ENCODE measurements at regions of chr15 and their contacts with region 1.

Region 1: DNA sequence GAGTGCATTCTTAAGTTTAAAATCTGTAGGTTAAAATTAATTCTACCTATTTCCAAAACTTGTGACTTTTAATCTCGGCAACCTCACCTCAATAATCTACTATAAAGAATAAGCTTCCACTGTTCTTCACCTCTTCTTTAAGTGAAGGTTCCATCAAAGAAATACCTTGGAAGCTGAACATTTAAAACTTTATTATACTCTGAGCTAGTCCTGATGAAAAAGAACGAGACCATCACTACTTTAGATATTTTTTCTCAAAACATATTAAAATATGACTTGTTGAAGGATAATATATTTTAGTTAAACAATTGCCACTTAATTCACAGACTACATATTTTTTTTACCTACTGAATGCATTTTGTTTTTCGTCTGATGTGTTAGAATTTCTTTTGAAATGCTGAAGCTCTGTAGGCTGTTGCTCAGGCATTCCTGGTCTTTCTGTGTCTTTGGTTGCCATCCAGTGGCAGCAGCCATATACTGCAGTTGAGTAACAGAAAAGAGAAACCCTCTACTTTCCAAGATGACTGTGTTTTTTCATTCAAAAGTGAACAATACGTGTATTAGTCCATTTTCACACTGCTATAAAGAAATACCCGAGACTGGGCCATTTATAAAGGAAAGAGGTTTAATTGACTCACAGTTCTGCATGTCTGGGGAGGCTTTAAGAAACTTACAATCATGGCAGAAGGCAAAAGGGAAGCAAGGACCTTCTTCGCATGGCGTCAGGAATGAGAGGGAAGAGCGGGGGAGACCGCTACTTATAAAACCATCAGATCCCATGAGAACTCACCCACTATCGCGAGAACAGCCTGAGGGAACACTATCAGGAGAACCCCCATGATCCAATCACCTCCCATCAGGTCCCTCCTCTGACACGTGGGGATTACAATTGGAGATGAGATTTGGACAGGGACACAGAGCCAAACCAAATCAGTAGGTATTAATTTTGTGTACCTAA is 4.5 kb upstream of the GOLGA8B start:
- DNase-seq: peak; percentile 78
- ATAC-seq: peak; percentile 64
- H3K4me3 Mint-ChIP-seq: peak overlapping the region; percentile 74
- H3K27ac Mint-ChIP-seq: peak overlapping the region; percentile 71
- H3K4me1 Mint-ChIP-seq: peaks cover 6% of the 10 kb centered on the region
- H3K27me3 Mint-ChIP-seq: peaks cover 22% of the 10 kb centered on the region

Region 2: DNA sequence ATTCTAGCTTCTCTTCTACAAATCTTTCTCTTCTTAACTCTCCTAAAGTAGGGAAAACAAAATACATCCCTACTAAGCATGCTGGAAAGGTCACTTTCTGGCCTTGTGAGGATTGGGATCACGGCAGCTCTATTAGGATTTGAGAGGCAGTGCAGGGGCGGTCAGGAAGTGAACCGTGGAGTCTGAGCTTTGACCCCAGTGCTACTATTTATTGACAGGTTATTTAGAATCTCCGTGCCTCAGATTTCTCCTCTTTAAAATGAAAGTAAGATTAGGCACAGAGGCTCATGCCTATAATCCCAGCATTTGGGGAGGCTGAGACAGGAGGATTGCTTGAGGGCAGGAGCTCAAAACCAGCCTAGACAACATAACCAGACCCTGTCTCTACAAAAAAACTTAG is 661.7 kb before region 1 on chr15:
- CTCF ChIA-PET with region 1: no interaction called
- POLR2A ChIA-PET with region 1: no interaction called
- intact Hi-C with region 1: no loop called
- DNase-seq: no peak
- ATAC-seq: no peak
- H3K4me3 Mint-ChIP-seq: no peak overlapping the region
- H3K27ac Mint-ChIP-seq: no peak overlapping the region
- H3K4me1 Mint-ChIP-seq: no peaks in the 10 kb centered on the region
- H3K27me3 Mint-ChIP-seq: no peaks in the 10 kb centered on the region

Region 3: DNA sequence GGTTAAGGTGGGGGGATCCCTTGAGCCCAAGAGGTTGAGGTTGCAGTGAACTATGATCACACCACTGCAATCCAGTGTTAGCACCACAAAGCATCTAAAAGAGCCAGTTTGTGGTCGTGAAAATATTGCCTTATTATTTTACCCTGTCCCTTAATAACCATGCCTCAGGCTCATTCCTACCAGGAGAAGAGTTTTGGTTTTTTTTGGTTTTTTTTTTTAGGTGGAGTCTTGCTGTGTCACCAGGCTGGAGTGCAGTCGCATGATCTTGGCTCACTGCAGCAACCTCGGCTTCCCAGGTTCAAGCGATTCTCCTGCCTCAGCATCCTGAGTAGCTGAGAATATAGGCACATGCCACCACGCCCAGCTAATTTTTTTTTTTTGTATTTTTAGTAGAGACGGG is 531.1 kb before region 1 on chr15:
- CTCF ChIA-PET with region 1: no interaction called
- POLR2A ChIA-PET with region 1: no interaction called
- intact Hi-C with region 1: loop called (anchors 1 to 2 kb)
- DNase-seq: no peak
- ATAC-seq: no peak
- H3K4me3 Mint-ChIP-seq: no peak overlapping the region
- H3K27ac Mint-ChIP-seq: no peak overlapping the region
- H3K4me1 Mint-ChIP-seq: peaks cover 4% of the 10 kb centered on the region
- H3K27me3 Mint-ChIP-seq: no peaks in the 10 kb centered on the region

Region 4: DNA sequence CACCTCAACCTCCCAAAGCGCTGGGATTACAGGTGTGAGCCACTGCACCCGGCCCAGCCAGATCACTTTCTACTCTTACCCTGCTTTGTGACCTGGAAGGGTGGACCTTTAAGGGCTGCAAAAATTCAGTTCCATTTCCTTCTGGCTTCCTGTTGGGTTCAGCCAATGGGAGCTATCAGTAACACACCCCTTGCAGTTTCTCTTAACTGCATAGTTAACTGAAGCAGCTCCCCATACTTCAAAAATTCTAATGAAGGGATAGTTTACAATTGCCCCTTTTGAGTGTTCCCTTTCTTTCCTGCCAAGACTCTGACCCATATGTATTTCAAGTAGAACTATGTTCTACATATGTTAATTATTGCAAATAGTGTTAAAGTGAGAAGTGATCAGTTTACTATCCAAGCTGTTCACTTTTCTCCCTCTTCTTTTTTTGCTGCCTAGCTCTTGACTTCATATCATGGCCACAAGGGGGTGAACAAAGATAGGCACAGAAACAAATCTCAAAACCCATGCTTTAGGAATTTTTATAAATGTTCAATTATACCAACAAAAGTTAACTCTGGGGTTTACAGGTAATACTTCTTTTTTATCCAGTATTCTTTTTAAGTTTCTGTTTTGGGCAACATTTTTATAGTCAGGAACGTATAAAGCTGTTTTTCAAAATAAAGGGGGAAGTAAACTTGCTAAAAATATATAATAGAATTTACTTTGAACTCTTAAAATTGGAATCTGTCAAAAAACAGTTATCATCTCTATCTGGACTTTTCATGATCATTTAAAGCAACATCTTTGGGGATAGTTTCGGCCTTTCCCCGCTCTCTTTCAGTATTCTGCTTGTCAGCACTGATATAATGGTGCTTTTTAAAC is 478.0 kb before region 1 on chr15:
- CTCF ChIA-PET with region 1: interaction called, 6 read pairs
- POLR2A ChIA-PET with region 1: no interaction called
- intact Hi-C with region 1: loop called (anchors 1 to 5 kb)
- DNase-seq: no peak
- ATAC-seq: peak; percentile 60
- H3K4me3 Mint-ChIP-seq: no peak overlapping the region
- H3K27ac Mint-ChIP-seq: no peak overlapping the region
- H3K4me1 Mint-ChIP-seq: no peaks in the 10 kb centered on the region
- H3K27me3 Mint-ChIP-seq: peaks cover 2% of the 10 kb centered on the region

Region 5: DNA sequence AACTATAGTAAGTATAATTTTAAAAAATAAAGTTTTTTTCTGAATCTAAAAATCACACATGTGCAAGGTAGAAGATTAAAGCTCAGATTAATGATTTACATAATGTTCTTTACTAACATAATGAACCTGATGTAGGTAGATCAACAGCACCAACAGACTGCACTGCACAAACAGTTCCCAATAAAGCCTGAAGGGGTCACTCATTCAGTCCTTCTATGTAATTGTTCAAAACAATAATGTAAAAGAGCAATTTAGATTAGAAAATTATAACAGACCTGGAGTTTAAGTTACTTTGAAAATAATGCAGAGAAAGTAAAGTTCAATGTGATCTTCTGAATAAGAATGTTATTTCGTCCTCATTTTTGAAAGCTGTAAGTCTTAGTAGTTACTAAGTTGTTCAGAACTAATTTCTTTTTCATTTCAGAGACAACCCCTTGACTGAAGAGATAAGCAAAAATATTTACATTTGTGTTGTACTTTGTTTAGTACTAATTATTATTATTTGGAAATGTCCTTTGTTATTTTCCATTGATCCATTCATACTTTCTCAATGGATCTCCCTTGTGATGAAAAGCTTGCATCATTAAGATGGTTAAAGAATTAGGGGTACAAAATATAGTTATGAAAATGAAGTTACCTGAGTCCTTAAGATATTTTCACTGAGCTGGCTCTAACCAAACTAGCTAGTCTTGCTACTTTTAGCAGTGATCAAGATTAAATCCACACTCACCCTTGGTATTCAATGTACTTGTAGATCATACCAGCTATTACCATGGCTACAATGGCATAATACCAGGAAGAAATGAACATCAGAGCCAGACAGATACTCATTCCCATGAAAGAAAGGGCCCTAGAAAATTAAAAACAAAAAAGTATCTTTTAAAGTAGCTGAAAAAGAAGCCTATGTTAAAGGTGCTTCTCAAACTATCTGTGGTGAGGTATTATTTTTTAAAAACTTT is 346.3 kb before region 1 on chr15:
- CTCF ChIA-PET with region 1: interaction called, 9 read pairs
- POLR2A ChIA-PET with region 1: no interaction called
- intact Hi-C with region 1: loop called in 1 of 2 experiments (anchors 2 kb)
- DNase-seq: peak; percentile 35
- ATAC-seq: peak; percentile 68
- H3K4me3 Mint-ChIP-seq: no peak overlapping the region
- H3K27ac Mint-ChIP-seq: peak overlapping the region; percentile 39
- H3K4me1 Mint-ChIP-seq: peaks cover 33% of the 10 kb centered on the region
- H3K27me3 Mint-ChIP-seq: no peaks in the 10 kb centered on the region

Region 6: DNA sequence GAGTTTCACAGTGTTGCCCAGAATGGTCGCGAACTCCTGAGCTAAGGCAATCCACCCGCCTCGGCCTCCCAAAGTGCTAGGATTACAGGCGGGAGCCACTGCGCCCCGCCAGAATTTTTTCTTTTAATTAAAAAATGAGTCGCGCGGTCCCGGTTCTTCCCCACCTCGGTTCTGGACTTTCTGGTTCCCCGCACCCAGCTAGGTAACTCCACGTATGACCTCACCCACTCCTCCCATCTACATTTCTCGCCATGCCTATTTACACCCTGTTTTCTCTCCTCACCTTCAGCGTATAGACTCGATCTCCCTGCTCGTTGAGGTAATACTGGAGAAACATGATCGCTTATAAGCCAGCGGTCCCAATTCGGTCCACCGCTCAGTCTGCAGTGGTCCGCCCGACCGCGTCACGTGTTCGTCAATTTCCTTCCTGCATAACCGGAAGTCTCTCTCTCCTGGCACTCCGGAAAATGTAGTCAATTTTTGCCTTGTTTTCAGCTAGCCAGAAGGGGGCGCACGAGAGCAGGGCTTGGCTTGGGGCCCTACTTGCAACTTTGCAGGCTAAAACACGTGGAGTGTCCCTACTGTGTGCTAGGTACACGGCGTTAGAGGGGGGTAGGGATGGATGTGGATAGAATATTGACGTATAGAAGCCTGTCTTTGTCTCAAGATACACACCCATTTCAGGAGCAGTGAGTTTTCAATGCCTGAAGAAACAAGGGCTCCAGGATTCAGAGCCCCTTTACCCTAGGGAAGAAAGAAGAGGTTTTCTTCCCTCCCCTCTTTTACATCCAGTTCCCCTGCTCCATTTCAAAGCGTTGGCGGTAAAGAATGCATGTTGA is 245.0 kb before region 1 on chr15 and contains the starts of genes NOP10 and NUTM1:
- CTCF ChIA-PET with region 1: interaction called, 3 read pairs
- POLR2A ChIA-PET with region 1: interaction called, 4 read pairs
- intact Hi-C with region 1: loop called (anchors 1 to 2 kb)
- DNase-seq: peak; percentile 97
- ATAC-seq: peak; percentile 91
- H3K4me3 Mint-ChIP-seq: no peak within 1 kb of the TSS
- H3K27ac Mint-ChIP-seq: peak within 1 kb of the TSS; percentile 88
- H3K4me1 Mint-ChIP-seq: peaks cover 30% of the 10 kb centered on the region
- H3K27me3 Mint-ChIP-seq: no peaks in the 10 kb centered on the region
- total RNA-seq, gene NOP10: 217 to 313 TPM
- total RNA-seq, gene NUTM1: not detected

Region 7: DNA sequence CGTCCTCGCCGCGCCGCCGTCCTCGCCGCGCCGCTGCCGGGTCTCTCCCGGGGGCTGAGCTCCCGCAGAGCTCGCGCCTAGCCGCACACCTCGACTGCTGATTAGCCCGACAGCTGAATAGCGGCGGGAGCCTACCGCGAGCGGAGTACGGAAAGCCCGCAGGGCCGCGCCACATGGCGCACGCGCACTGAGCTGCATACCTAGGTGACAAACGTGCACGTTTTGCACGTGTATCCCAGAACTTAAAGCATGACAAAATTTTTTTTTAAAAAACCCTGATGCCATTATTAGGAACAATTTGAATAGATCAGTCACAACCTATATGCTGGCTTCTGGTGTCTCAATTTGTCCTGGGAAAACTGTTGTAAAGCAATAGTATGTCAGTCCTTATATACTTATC is 150.3 kb before region 1 on chr15 and contains the start of gene GOLGA8A:
- CTCF ChIA-PET with region 1: interaction called, 3 read pairs
- POLR2A ChIA-PET with region 1: no interaction called
- intact Hi-C with region 1: loop called in 1 of 2 experiments (anchors 5 kb)
- DNase-seq: peak; percentile 94
- ATAC-seq: peak; percentile 85
- H3K4me3 Mint-ChIP-seq: peak within 1 kb of the TSS; percentile 86
- H3K27ac Mint-ChIP-seq: peak within 1 kb of the TSS; percentile 95
- H3K4me1 Mint-ChIP-seq: peaks cover 18% of the 10 kb centered on the region
- H3K27me3 Mint-ChIP-seq: peaks cover under 1% of the 10 kb centered on the region
- total RNA-seq, gene GOLGA8A: 147 to 165 TPM

Region 8: DNA sequence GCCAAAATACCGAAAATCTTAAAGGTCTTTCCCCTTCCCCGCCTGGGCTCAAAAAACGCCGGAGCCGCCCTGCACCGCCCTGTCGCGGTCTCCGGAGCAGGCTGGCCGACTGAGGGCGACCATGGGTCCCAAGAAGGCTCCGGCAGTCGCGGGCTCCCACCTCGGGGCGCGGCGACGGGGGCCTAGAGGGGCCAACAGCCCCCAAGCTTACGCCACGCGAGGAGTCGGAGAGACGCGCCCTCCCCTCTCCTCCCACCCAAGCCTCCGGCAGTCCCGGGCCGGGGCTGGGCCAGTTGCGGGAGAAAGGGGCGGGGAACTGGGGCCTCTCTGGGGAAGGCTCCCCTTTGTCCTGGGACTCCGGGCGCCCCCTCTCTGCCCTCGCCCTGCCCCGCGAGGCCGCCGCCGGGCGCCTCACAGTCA is 73.7 kb before region 1 on chr15:
- CTCF ChIA-PET with region 1: interaction called, 12 read pairs
- POLR2A ChIA-PET with region 1: no interaction called
- intact Hi-C with region 1: loop called (anchors 2 kb)
- DNase-seq: peak; percentile 39
- ATAC-seq: peak; percentile 52
- H3K4me3 Mint-ChIP-seq: peak overlapping the region; percentile 71
- H3K27ac Mint-ChIP-seq: no peak overlapping the region
- H3K4me1 Mint-ChIP-seq: peaks cover 11% of the 10 kb centered on the region
- H3K27me3 Mint-ChIP-seq: peaks cover 51% of the 10 kb centered on the region

Region 9: GRCh38 chr15:34603134-34603533 is 15.1 kb after region 1 on chr15:
- CTCF ChIA-PET with region 1: no interaction called
- POLR2A ChIA-PET with region 1: no interaction called
- intact Hi-C with region 1: no loop called
- DNase-seq: no peak
- ATAC-seq: no peak
- H3K4me3 Mint-ChIP-seq: no peak overlapping the region
- H3K27ac Mint-ChIP-seq: no peak overlapping the region
- H3K4me1 Mint-ChIP-seq: no peaks in the 10 kb centered on the region
- H3K27me3 Mint-ChIP-seq: peaks cover 36% of the 10 kb centered on the region